Right lobe of liver (tissue), 6 donors: ENCODE measurements at regions of chr11 and their contacts with region 1.

Region 1: DNA sequence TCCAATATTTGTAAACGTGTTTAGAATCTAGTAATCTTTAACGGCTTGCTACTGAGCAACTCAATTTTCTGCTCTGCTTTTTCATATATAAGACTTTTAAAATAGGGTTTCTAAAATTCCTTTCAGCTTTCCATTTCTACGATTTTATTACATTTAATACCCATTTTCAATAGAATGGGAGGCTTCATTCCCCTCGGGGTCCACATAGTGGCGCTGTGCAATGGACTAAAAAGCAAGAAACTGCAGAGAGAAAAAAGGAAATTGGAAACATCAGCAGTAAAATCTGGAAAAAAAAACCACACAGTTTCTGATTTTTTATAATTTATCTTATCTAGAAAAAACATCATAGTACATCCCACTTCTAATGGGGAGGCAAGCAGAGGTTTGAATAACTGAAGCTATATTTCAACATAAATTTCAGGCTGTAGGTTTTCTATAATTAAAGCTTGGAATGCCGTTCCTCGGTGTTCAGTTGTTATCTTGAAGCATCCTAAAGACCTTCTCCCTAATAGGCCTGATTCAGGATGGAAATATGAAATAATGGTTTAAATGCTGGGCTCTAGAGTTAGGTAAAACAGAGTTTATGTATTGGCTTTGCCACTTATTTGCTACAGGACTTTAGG is 18.7 kb upstream of the JHY start:
- DNase-seq: peak in 1 of 3 donors; percentile 30
- ATAC-seq: peak; percentile 41 to 66 (median 60)
- H3K4me3 ChIP-seq: no peak overlapping the region
- H3K27ac ChIP-seq: no peak overlapping the region
- H3K4me1 ChIP-seq: no peaks in the 10 kb centered on the region
- H3K27me3 ChIP-seq: peaks cover 0 to 7% of the 10 kb centered on the region in 2 donors
- CTCF ChIP-seq: peak; percentile 57 to 84 (median 70)
- POLR2A ChIP-seq: no peak

Region 2: DNA sequence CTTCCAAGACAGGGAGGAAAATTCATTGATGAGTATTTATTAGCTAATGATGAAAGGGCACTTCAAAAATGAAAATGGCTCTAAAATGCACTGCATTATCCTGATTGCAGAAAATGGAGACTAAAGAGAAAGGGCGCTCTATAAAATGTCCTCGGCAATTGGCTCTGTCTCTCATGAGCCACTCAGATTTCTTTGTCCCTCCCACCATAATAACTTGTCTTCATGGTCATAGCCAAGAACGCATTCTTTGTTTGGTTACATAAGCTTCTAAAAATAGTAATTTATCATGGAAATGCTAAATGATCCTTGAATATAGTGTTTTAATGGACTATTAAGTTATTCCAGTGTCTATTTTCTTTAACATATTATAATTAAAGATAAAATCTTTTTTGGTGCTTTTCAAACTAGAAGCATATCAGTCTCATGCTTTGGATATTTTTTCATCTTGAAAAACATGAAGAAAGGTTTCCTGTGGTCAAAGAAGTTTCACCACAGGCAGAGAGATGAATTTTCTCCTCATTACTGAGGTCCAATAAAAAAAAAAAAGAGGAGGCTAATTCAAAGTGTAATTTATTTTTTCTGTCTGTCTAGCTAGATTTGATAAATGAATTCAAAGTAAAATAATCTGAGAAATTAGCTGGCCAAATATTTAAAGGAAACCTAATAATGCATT is 509.7 kb before region 1 on chr11:
- intact Hi-C with region 1: no loop called
- DNase-seq: no peak
- ATAC-seq: no peak
- H3K4me3 ChIP-seq: no peak overlapping the region
- H3K27ac ChIP-seq: no peak overlapping the region
- H3K4me1 ChIP-seq: no peaks in the 10 kb centered on the region
- H3K27me3 ChIP-seq: no peaks in the 10 kb centered on the region
- CTCF ChIP-seq: no peak
- POLR2A ChIP-seq: no peak

Region 3: GRCh38 chr11:123039605-123040432 is 176.0 kb after region 1 on chr11:
- intact Hi-C with region 1: loop called in 1 of 2 experiments (anchors 10 kb)
- DNase-seq: no peak
- ATAC-seq: no peak
- H3K4me3 ChIP-seq: no peak overlapping the region
- H3K27ac ChIP-seq: no peak overlapping the region
- H3K4me1 ChIP-seq: no peaks in the 10 kb centered on the region
- H3K27me3 ChIP-seq: no peaks in the 10 kb centered on the region
- CTCF ChIP-seq: no peak
- POLR2A ChIP-seq: no peak